ENCODE measurements at regions of chr14 and their contacts with region 1.

Region 1: DNA sequence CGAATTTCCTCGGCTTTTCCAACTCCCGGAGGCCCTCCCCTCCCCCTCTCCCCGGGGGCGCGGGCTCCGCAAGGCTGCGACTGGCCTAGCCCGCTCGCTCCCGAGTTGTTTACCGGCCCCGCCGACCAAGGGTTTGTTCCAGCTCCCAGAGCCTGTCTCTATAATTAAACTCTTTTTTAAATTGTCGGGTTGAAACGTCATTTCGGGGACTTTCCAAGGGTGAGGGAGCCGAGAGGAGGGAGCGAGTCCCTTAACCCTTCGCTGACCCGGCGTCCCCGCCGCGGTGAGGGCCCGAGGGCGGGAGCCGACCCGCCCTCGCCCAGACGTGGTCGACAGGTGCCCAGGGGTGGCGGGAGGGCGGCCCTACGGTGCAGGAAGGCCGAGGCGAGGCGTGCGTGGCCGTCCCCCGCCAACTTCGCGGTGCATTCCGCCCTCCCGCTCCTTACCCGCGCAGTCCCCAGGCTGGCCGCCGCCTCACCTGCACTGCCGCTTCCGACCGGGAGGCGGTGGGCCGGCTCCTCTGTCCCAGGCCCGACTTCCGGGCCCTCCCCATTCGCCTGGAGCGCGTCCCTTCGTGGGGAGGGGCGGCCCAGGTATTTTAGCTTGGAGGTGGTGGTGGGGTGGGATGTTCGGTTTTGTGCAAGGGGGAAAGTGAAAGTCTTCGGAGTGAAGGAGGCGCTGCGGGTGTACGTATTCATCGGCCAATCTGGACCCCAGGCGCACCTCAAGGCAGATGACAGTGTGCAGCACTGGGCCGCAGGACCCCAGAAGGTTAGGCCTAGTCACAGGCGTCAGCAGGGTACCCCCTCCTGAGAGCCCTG is 2.9 kb upstream of the ZFP36L1 start:
- DNase-seq: peak; percentile 70
- ATAC-seq: peak; percentile 86
- H3K4me3 ChIP-seq: peak overlapping the region; percentile 93 to 98 (median 94)
- H3K27ac ChIP-seq: peak overlapping the region; percentile 98
- H3K4me1 ChIP-seq: peaks cover 28% of the 10 kb centered on the region
- H3K27me3 ChIP-seq: no peaks in the 10 kb centered on the region; a peak in 1 of 5 replicates
- CTCF ChIP-seq: peak; percentile 84
- EP300 ChIP-seq: no peak
- POLR2A ChIP-seq: peak; percentile 49 to 85
- RAD21 ChIP-seq: peak; percentile 41

Region 2: GRCh38 chr14:68598621-68599447 is 197.0 kb before region 1 on chr14:
- CTCF ChIA-PET with region 1: no interaction called
- POLR2A ChIA-PET with region 1: interaction called, 13 read pairs
- in situ Hi-C with region 1: no loop called
- intact Hi-C with region 1: no loop called
- DNase-seq: peak; percentile 94
- ATAC-seq: peak; percentile 89
- H3K4me3 ChIP-seq: peak overlapping the region in 1 of 3 experiments; percentile 55; a peak in 3 of 6 replicates
- H3K27ac ChIP-seq: peak overlapping the region; percentile 79
- H3K4me1 ChIP-seq: peaks cover 85% of the 10 kb centered on the region
- H3K27me3 ChIP-seq: no peaks in the 10 kb centered on the region
- CTCF ChIP-seq: no peak
- EP300 ChIP-seq: peak in 1 of 2 experiments; percentile 86; a peak in 2 of 4 replicates
- POLR2A ChIP-seq: peak in 1 of 2 experiments; percentile 42; a peak in 2 of 4 replicates
- RAD21 ChIP-seq: no peak

Region 3: GRCh38 chr14:68727315-68728047 is 68.3 kb before region 1 on chr14:
- CTCF ChIA-PET with region 1: no interaction called
- POLR2A ChIA-PET with region 1: interaction called, 33 read pairs
- in situ Hi-C with region 1: no loop called
- intact Hi-C with region 1: no loop called
- DNase-seq: no peak
- ATAC-seq: peak; percentile 13; the same call in 2 of the 3 replicates
- H3K4me3 ChIP-seq: peak overlapping the region in 1 of 3 experiments; percentile 14; a peak in 1 of 6 replicates
- H3K27ac ChIP-seq: no peak overlapping the region
- H3K4me1 ChIP-seq: peaks cover 77% of the 10 kb centered on the region
- H3K27me3 ChIP-seq: no peaks in the 10 kb centered on the region
- CTCF ChIP-seq: no peak
- EP300 ChIP-seq: no peak
- POLR2A ChIP-seq: no peak
- RAD21 ChIP-seq: no peak

Region 4: DNA sequence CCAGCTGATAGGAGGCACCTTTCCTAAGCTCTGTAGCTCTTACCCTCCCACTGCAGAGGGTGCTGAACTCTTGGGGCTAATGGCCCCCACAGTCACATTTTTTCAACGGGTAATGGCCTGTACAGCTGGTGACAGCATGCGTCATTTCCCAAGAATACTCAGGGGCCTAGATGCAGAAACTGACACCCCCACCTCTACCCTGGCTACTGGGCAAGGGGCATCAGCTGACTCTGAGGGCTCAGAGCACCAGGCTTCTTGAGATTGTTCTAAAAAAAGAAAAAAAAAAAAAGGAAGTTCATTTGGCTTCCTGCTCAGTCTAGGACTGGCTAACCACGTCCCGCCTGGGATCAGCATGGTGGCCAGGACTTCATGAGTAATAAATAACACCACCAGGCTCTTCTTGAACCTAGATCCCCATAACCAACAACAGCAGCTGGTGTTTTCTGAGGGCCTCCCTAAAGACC is 38.2 kb before region 1 on chr14:
- CTCF ChIA-PET with region 1: no interaction called
- POLR2A ChIA-PET with region 1: interaction called, 16 read pairs
- in situ Hi-C with region 1: no loop called
- intact Hi-C with region 1: no loop called
- DNase-seq: peak; percentile 39
- ATAC-seq: peak; percentile 30
- H3K4me3 ChIP-seq: peak overlapping the region in 2 of 3 experiments; percentile 3 to 60; a peak in 1 of 6 replicates
- H3K27ac ChIP-seq: no peak overlapping the region
- H3K4me1 ChIP-seq: peaks cover 97% of the 10 kb centered on the region
- H3K27me3 ChIP-seq: no peaks in the 10 kb centered on the region
- CTCF ChIP-seq: no peak
- EP300 ChIP-seq: no peak
- POLR2A ChIP-seq: no peak
- RAD21 ChIP-seq: no peak

Region 5: GRCh38 chr14:68780358-68781160 is 15.2 kb before region 1 on chr14:
- CTCF ChIA-PET with region 1: no interaction called
- POLR2A ChIA-PET with region 1: interaction called, 244 read pairs
- in situ Hi-C with region 1: no loop called
- intact Hi-C with region 1: no loop called
- DNase-seq: no peak
- ATAC-seq: 0 out of 3 replicates have a peak, but pooled peaks have one; percentile 2
- H3K4me3 ChIP-seq: peak overlapping the region; percentile 37 to 65 (median 51)
- H3K27ac ChIP-seq: peak overlapping the region; percentile 69
- H3K4me1 ChIP-seq: peaks cover 91% of the 10 kb centered on the region
- H3K27me3 ChIP-seq: no peaks in the 10 kb centered on the region
- CTCF ChIP-seq: no peak
- EP300 ChIP-seq: no peak
- POLR2A ChIP-seq: no peak
- RAD21 ChIP-seq: no peak

Region 6: GRCh38 chr14:68816262-68816942 is 20.6 kb after region 1 on chr14:
- CTCF ChIA-PET with region 1: interaction called, 5 read pairs
- POLR2A ChIA-PET with region 1: interaction called, 74 read pairs
- in situ Hi-C with region 1: no loop called
- intact Hi-C with region 1: loop called (anchors 1 kb)
- DNase-seq: peak; percentile 63
- ATAC-seq: peak; percentile 76
- H3K4me3 ChIP-seq: peak overlapping the region in 2 of 3 experiments; percentile 47 to 66; a peak in 4 of 6 replicates
- H3K27ac ChIP-seq: peak overlapping the region; percentile 10
- H3K4me1 ChIP-seq: peaks cover 77% of the 10 kb centered on the region
- H3K27me3 ChIP-seq: no peaks in the 10 kb centered on the region
- CTCF ChIP-seq: peak; percentile 99
- EP300 ChIP-seq: no peak
- POLR2A ChIP-seq: no peak
- RAD21 ChIP-seq: peak; percentile 99

Region 7: DNA sequence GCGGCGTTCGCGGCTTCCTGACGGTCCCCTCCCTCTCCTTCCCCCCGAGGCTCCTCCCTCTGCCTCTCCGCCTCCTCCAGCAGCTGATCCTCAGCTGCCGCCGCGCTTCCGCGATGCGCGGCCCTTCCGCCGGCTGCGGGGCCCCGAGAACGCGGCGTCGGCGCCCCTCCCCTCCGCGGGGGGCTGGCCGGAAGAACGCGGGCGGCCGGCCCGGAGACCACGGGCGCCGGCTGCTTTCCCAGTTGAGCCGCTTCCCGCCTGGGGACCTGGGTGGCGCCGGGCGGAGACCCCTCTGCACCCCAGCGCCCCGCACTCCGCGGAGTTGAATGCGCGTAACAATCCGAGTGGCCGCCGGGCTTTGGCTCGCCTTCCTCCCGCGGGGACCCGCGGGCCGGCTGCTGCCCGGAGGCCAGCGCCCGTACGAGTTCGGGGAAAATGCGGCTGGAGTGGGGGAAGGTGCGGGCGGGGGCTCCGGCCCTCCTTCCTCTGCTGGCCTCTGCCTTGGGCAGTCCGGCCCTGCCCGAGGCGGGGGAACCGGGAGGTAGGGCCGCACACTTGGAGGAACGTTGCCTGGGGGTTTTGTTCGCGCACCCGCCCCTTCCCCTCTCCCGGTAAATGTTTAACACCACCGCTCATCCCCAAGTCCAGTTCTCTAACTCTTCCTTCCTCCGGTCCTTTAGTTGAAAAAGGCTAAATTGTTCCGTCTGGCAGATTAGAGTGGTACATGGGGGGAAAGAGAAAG is 357.5 kb after region 1 on chr14:
- CTCF ChIA-PET with region 1: no interaction called
- POLR2A ChIA-PET with region 1: no interaction called
- in situ Hi-C with region 1: no loop called
- intact Hi-C with region 1: no loop called
- DNase-seq: peak; percentile 85
- ATAC-seq: peak; percentile 84
- H3K4me3 ChIP-seq: peak overlapping the region; percentile 95 to 99 (median 96)
- H3K27ac ChIP-seq: peak overlapping the region; percentile 90
- H3K4me1 ChIP-seq: peaks cover 51% of the 10 kb centered on the region
- H3K27me3 ChIP-seq: no peaks in the 10 kb centered on the region; a peak in 1 of 5 replicates
- CTCF ChIP-seq: peak; percentile 22; the same call in 1 of the 2 replicates
- EP300 ChIP-seq: peak in 1 of 2 experiments; percentile 22; a peak in 1 of 4 replicates
- POLR2A ChIP-seq: peak in 1 of 2 experiments; percentile 80; a peak in 3 of 4 replicates
- RAD21 ChIP-seq: peak; percentile 57

Region 8: DNA sequence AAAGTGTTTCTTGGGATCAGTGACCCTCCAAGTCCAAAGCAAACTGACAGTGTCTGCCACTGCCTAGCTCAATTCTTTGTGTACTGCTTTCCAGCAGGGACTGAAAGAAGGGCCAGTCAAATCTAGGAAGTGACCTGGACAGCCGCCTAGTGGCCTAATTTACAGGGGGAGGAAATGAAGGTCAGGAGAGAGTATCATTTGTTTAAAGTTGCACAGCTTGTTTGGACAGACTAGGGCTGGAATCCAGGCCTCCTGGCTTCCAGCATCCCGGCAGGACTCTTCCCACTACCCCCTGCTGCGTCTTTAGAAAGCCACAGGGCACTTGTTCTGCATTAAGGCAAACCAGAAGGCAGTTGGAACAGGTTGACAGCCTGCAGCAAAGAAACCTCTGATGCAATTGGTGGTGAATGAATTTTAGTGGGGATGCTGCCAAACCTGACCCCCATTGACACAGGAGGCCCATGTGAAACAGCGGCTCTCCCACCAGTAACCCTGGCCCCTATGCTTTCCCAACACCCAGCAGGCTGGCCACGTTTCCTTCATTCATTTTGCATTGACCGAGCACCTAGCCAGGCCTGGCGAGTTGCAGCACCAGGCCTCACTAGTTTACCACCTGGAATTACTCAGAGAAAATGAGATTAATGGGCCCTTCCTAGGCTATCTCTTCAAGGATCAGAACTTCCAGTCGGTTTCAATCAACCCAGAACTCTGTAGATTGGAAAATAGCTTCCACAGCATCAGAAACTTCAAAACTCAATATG is 492.4 kb after region 1 on chr14:
- CTCF ChIA-PET with region 1: no interaction called
- POLR2A ChIA-PET with region 1: no interaction called
- in situ Hi-C with region 1: no loop called
- intact Hi-C with region 1: no loop called
- DNase-seq: peak; percentile 23
- ATAC-seq: peak; percentile 78
- H3K4me3 ChIP-seq: no peak overlapping the region
- H3K27ac ChIP-seq: no peak overlapping the region
- H3K4me1 ChIP-seq: peaks cover 25% of the 10 kb centered on the region
- H3K27me3 ChIP-seq: 0 out of 5 replicates have a peak, but pooled peaks cover 0 to 2% of the 10 kb centered on the region in 2 experiments
- CTCF ChIP-seq: peak; percentile 67
- EP300 ChIP-seq: no peak
- POLR2A ChIP-seq: no peak
- RAD21 ChIP-seq: no peak